Aorta (tissue), 5 donors: ENCODE measurements at regions of chr2 and their contacts with region 1.

Region 1: GRCh38 chr2:121722479-121722878 is 14.2 kb downstream of the NIFK start:
- DNase-seq: no peak
- ATAC-seq: no peak
- H3K4me3 ChIP-seq: no peak overlapping the region
- H3K27ac ChIP-seq: no peak overlapping the region
- H3K4me1 ChIP-seq: peaks cover 0 to 4% of the 10 kb centered on the region in 2 donors
- H3K27me3 ChIP-seq: no peaks in the 10 kb centered on the region

Region 2: DNA sequence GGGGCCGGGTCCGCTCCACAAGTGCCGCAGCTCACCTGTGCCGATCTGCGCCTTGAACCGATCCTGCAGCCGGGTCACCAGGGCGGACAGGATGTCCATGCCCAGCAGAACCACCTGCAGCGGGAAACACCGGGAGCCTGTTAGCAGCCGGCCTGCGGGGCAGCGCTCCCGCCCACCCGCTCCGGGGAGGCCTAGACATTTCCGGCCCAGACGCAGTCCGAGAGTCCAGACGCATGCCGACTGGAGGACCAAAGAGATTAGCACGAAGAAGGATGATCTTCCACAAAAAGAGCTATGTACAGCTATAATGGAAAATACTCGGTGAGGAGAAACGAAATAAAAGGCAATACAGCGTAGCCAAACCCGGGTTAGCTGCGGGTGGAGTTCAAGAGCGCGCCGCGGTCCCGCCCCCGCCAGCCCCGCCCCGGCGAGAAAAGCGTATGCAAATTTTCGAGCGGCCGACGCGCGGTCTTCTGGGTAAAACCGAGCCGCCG is 192.2 kb before region 1 on chr2:
- intact Hi-C with region 1: loop called (anchors 2 to 5 kb)
- DNase-seq: peak; percentile 88 to 94
- ATAC-seq: peak; percentile 94
- H3K4me3 ChIP-seq: peak overlapping the region; percentile 59 to 72
- H3K27ac ChIP-seq: peak overlapping the region; percentile 97 to 99
- H3K4me1 ChIP-seq: no peaks in the 10 kb centered on the region
- H3K27me3 ChIP-seq: peaks cover 0 to 2% of the 10 kb centered on the region in 2 donors

Region 3: DNA sequence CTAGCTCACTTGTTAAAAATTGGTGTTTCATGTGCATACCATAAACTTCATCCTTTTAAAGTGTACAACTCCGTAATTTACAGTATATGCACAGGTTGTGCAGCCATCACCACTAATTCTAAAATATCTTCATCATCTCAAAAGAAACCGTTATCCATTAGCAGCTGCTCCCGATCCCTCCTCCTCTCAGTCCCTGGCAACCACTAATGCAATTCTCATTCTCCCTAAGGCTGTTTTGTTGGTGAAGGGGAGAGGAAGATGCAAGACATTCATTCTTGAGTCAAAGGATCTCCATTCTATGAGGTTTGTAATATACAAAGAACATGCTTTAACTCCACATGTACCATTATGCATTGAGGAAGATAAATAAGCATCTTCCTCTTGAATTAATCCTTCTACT is 143.2 kb before region 1 on chr2:
- intact Hi-C with region 1: no loop called
- DNase-seq: no peak
- ATAC-seq: no peak
- H3K4me3 ChIP-seq: no peak overlapping the region
- H3K27ac ChIP-seq: no peak overlapping the region
- H3K4me1 ChIP-seq: peaks cover 0 to 2% of the 10 kb centered on the region in 2 donors
- H3K27me3 ChIP-seq: no peaks in the 10 kb centered on the region

Region 4: GRCh38 chr2:121707920-121708361 is 14.5 kb before region 1 on chr2:
- intact Hi-C with region 1: no loop called
- DNase-seq: no peak
- ATAC-seq: no peak
- H3K4me3 ChIP-seq: no peak overlapping the region
- H3K27ac ChIP-seq: no peak overlapping the region
- H3K4me1 ChIP-seq: peaks cover 0 to 2% of the 10 kb centered on the region in 2 donors
- H3K27me3 ChIP-seq: no peaks in the 10 kb centered on the region

Region 5: DNA sequence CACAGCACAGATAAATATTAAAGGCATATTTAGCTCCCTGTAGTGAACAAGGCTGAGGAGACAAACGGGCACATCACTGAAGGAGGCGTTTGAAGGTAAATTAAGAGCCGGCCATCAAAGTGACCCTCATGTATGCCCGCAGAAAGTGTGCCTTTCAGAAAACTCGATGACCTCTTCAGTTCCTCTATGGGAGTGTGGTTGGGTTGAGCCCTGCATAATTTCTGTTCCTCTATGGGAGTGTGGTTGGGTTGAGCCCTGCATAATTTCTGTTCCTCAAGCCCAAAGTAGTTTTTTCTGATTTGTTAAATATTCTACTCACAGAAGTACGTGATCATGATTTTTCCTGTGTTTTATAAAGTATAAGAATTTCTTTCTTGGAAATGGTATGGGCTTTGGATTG is 601.4 kb after region 1 on chr2:
- intact Hi-C with region 1: no loop called
- DNase-seq: no peak
- ATAC-seq: no peak
- H3K4me3 ChIP-seq: no peak overlapping the region
- H3K27ac ChIP-seq: no peak overlapping the region
- H3K4me1 ChIP-seq: no peaks in the 10 kb centered on the region
- H3K27me3 ChIP-seq: peaks cover 0 to 4% of the 10 kb centered on the region in 2 donors